PC-3 (cell line): ENCODE measurements at regions of chr21 and their contacts with region 1.

Region 1: GRCh38 chr21:33894736-33895288 is 20.8 kb downstream of the ATP5PO start:
- DNase-seq: peak; percentile 90
- ATAC-seq: peak; percentile 95
- H3K4me3 ChIP-seq: peak overlapping the region; percentile 52
- H3K27ac ChIP-seq: no peak overlapping the region
- H3K4me1 ChIP-seq: peaks cover 13% of the 10 kb centered on the region
- H3K27me3 ChIP-seq: no peaks in the 10 kb centered on the region
- CTCF ChIP-seq: peak; percentile 83

Region 2: DNA sequence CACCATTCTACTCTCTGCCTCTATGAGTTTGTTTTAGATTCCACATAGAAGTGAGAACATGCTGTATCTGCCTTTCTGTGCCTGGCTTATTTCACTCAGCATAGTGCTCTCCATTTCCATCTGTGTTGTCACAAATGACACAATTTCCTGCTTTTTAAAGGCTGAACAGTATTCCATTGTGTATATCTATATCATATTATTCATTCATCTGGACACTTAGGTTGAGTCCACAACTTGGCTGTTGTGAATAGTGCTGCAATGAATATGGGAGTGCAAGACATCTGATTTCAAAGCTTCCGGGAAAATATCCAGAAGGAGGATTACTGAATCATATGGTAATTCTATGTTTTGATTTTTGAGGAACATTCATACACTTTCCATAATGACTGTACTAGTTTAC is 286.3 kb before region 1 on chr21:
- CTCF ChIA-PET with region 1: interaction called, 4 read pairs
- POLR2A ChIA-PET with region 1: no interaction called
- intact Hi-C with region 1: loop called (anchors 1 kb)
- DNase-seq: no peak
- ATAC-seq: peak; percentile 51
- H3K4me3 ChIP-seq: no peak overlapping the region
- H3K27ac ChIP-seq: no peak overlapping the region
- H3K4me1 ChIP-seq: peaks cover 5% of the 10 kb centered on the region
- H3K27me3 ChIP-seq: no peaks in the 10 kb centered on the region
- CTCF ChIP-seq: no peak

Region 3: GRCh38 chr21:33641336-33642026 is 253.3 kb before region 1 on chr21 and contains the start of gene CRYZL1:
- CTCF ChIA-PET with region 1: interaction called, 7 read pairs
- POLR2A ChIA-PET with region 1: no interaction called
- intact Hi-C with region 1: loop called (anchors 1 kb)
- DNase-seq: peak; percentile 100
- ATAC-seq: peak; percentile 77
- H3K4me3 ChIP-seq: peak within 1 kb of the TSS; percentile 91
- H3K27ac ChIP-seq: peak within 1 kb of the TSS; percentile 61
- H3K4me1 ChIP-seq: peaks cover 26% of the 10 kb centered on the region
- H3K27me3 ChIP-seq: no peaks in the 10 kb centered on the region
- CTCF ChIP-seq: no peak
- total RNA-seq, gene CRYZL1: 12.4 and 16.6 TPM in 2 replicates

Region 4: GRCh38 chr21:33761441-33762036 is 133.3 kb before region 1 on chr21:
- CTCF ChIA-PET with region 1: interaction called, 5 read pairs
- POLR2A ChIA-PET with region 1: no interaction called
- intact Hi-C with region 1: loop called (anchors 2 kb)
- DNase-seq: peak; percentile 93
- ATAC-seq: peak; percentile 99
- H3K4me3 ChIP-seq: peak overlapping the region; percentile 28; the same call in 1 of the 2 replicates
- H3K27ac ChIP-seq: peak overlapping the region; percentile 57
- H3K4me1 ChIP-seq: peaks cover 27% of the 10 kb centered on the region
- H3K27me3 ChIP-seq: no peaks in the 10 kb centered on the region
- CTCF ChIP-seq: peak; percentile 33; the same call in 1 of the 2 replicates

Region 5: GRCh38 chr21:33801424-33802420 is 93.1 kb before region 1 on chr21:
- CTCF ChIA-PET with region 1: interaction called, 4 read pairs
- POLR2A ChIA-PET with region 1: no interaction called
- intact Hi-C with region 1: loop called (anchors 1 kb)
- DNase-seq: peak; percentile 98
- ATAC-seq: peak; percentile 99
- H3K4me3 ChIP-seq: peak overlapping the region; percentile 13; the same call in 1 of the 2 replicates
- H3K27ac ChIP-seq: peak overlapping the region; percentile 85
- H3K4me1 ChIP-seq: peaks cover 26% of the 10 kb centered on the region
- H3K27me3 ChIP-seq: no peaks in the 10 kb centered on the region
- CTCF ChIP-seq: no peak

Region 6: DNA sequence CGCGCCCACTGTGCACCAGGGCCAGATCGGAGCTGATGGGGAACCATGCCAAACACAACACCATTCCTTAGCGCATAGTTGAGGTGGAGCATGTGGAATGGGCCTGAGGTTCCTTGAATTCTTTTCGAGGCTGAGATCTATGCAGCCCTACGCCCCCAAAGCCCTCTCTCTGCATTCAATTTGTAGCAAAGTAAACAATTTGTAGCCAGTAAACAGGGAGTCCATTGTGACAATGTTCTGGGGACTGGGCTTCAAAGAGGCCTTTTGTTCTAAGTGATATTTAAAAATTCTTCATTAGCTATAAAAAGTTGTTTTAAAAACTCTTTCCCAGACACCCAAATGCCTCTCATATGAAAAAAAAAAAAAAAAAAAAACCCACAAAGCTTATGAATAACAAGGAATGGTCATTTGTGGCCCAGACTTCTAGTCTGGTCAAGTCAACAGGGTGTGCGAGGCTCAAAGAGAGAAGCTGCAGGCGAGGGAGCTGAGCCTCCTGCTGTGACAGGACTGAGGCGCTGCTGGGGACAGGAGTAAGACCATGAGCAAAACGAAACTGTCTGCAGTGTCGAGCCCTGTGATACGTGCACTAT is 438.4 kb after region 1 on chr21:
- CTCF ChIA-PET with region 1: no interaction called
- POLR2A ChIA-PET with region 1: interaction called, 15 read pairs
- intact Hi-C with region 1: no loop called
- DNase-seq: no peak
- ATAC-seq: no peak
- H3K4me3 ChIP-seq: no peak overlapping the region
- H3K27ac ChIP-seq: no peak overlapping the region
- H3K4me1 ChIP-seq: no peaks in the 10 kb centered on the region
- H3K27me3 ChIP-seq: peaks cover 7% of the 10 kb centered on the region; the same call in 1 of the 2 replicates
- CTCF ChIP-seq: no peak